Transverse colon (tissue), 4 donors: ENCODE measurements at regions of chr9 and their contacts with region 1.

Region 1: GRCh38 chr9:37465249-37466036 is at the start of gene ZBTB5:
- DNase-seq: peak; percentile 99
- H3K4me3 ChIP-seq: peak within 1 kb of the TSS; percentile 69 to 95 (median 79)
- H3K27ac ChIP-seq: peak within 1 kb of the TSS; percentile 94 to 99 (median 98)
- H3K4me1 ChIP-seq: peaks cover 14 to 37% (median 30%) of the 10 kb centered on the region in 4 donors
- H3K27me3 ChIP-seq: no peaks in the 10 kb centered on the region
- CTCF ChIP-seq: no peak
- EP300 ChIP-seq: no peak
- POLR2A ChIP-seq: no peak
- total RNA-seq, gene ZBTB5: 3.2 to 14.6 (median 12.8) TPM

Region 2: DNA sequence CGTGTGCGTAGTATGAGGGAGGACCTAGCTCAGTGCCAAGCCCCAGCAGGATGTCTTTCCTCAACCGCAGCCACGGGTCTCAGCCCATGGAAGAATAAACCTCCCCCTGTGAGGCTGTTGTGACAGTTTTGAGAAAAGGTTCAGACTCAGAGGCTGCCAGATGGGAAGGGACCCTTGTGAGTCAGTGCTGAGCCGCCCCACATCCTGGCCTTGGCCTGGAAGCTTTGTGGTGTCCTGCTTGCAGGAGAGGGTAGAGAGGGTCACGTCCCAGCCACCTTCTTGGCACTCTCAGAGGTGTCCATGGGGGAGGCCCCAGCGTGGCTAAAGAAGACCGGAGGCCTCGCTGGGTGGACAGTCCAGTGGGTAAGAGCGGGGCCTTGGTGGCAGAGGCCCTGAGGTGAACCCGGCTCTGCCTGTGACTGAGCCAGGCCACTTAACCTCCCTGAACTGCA is 40.1 kb before region 1 on chr9:
- in situ Hi-C with region 1: no loop called
- intact Hi-C with region 1: loop called (anchors 2 kb)
- DNase-seq: no peak
- H3K4me3 ChIP-seq: no peak overlapping the region
- H3K27ac ChIP-seq: no peak overlapping the region
- H3K4me1 ChIP-seq: peaks cover 10 to 28% (median 23%) of the 10 kb centered on the region in 4 donors
- H3K27me3 ChIP-seq: no peaks in the 10 kb centered on the region
- CTCF ChIP-seq: no peak
- EP300 ChIP-seq: no peak
- POLR2A ChIP-seq: no peak

Region 3: DNA sequence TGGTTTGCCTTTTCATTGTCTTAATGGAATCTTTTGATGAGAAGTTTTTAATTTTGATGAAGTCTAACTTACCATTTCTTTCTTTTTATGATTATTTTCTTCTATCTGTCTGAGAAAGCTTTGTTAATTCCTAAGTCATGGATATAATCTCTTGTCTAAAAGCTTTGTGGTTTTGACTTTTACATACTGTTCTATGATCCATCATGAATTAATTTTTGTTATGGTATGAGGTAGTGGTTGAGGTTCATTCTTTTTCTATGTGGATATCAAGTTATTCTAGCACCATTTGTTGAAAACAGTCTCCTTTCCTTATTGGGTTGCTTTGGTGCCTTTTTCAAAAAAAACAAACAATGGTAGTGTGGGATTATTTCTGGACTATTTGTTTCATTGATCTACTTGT is 90.3 kb after region 1 on chr9:
- in situ Hi-C with region 1: no loop called
- intact Hi-C with region 1: no loop called
- DNase-seq: no peak
- H3K4me3 ChIP-seq: no peak overlapping the region
- H3K27ac ChIP-seq: no peak overlapping the region
- H3K4me1 ChIP-seq: no peaks in the 10 kb centered on the region
- H3K27me3 ChIP-seq: no peaks in the 10 kb centered on the region
- CTCF ChIP-seq: no peak
- EP300 ChIP-seq: no peak
- POLR2A ChIP-seq: no peak

Region 4: GRCh38 chr9:37592108-37592951 is 126.9 kb after region 1 on chr9 and contains the start of gene TOMM5:
- in situ Hi-C with region 1: loop called in 1 of 4 experiments (anchors 10 kb)
- intact Hi-C with region 1: no loop called
- DNase-seq: peak; percentile 94
- H3K4me3 ChIP-seq: peak within 1 kb of the TSS; percentile 56 to 86 (median 69)
- H3K27ac ChIP-seq: peak within 1 kb of the TSS; percentile 86 to 89 (median 88)
- H3K4me1 ChIP-seq: peaks cover 19 to 40% (median 25%) of the 10 kb centered on the region in 4 donors
- H3K27me3 ChIP-seq: no peaks in the 10 kb centered on the region
- CTCF ChIP-seq: no peak
- EP300 ChIP-seq: no peak
- POLR2A ChIP-seq: peak; percentile 89
- total RNA-seq, gene TOMM5: 14.3 to 70.3 (median 63.1) TPM

Region 5: GRCh38 chr9:37784616-37785483 is 319.4 kb after region 1 on chr9 and contains the start of gene EXOSC3:
- in situ Hi-C with region 1: loop called in 1 of 4 experiments (anchors 25 kb)
- intact Hi-C with region 1: no loop called
- DNase-seq: peak; percentile 91
- H3K4me3 ChIP-seq: peak within 1 kb of the TSS; percentile 68 to 93 (median 88)
- H3K27ac ChIP-seq: peak within 1 kb of the TSS; percentile 84 to 93 (median 89)
- H3K4me1 ChIP-seq: peaks cover 11 to 23% (median 15%) of the 10 kb centered on the region in 4 donors
- H3K27me3 ChIP-seq: no peaks in the 10 kb centered on the region
- CTCF ChIP-seq: peak in 3 of 5 experiments; percentile 10 to 33 (median 31)
- EP300 ChIP-seq: no peak
- POLR2A ChIP-seq: peak; percentile 75
- total RNA-seq, gene EXOSC3: 2.6 to 46.2 (median 14.7) TPM

Region 6: DNA sequence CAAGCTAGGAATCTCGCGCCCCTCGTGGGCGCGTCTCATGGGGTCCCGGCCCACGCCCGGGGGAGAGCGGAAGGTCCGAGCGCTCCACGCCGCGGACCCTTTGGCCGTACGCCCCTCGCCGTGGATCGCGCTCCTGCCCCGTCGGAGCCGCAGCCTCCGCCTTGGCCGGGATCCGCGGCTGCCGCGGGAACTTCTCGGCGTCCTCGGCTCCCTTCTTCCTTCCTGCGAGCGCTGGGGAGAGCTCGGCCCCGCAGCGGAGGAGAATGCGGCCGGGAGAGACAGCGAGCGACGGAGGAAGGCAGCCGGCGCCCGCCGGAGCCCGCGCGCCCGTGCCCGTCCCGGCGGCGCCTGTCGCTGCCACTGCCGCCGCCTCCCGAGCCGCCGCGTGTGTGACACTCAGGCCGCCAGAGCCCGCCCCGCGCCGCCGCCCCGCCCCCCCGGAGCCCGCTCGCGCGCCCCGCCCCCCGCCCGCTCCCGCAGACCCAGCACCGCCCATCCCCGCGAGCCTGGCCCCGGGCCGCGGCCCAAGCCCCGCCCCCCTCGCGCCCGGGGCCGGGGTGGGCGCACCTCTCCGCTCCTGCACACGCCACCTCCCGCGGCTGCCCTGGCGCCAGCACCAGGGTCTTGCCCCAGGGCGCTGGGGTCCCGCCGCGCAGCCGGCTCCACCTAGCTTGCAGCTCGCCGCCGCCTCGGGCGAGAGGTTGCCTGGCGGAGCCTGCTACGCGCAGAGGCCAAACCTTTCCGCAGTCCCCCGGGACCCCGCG is 603.6 kb after region 1 on chr9 and contains the start of gene SHB:
- in situ Hi-C with region 1: loop called in 1 of 4 experiments (anchors 25 kb)
- intact Hi-C with region 1: no loop called
- DNase-seq: peak; percentile 88
- H3K4me3 ChIP-seq: peak within 1 kb of the TSS; percentile 86 to 99 (median 94)
- H3K27ac ChIP-seq: peak within 1 kb of the TSS; percentile 93 to 98 (median 98)
- H3K4me1 ChIP-seq: peaks cover 11 to 58% (median 42%) of the 10 kb centered on the region in 4 donors
- H3K27me3 ChIP-seq: no peaks in the 10 kb centered on the region
- CTCF ChIP-seq: peak in 3 of 5 experiments; percentile 36 to 71 (median 55)
- EP300 ChIP-seq: no peak
- POLR2A ChIP-seq: peak; percentile 60
- total RNA-seq, gene SHB: 11.9 to 33.7 (median 22.2) TPM